ENCODE measurements at regions of chr17 and their contacts with region 1.

Region 1: GRCh38 chr17:59688008-59688407 is 19.2 kb downstream of the PTRH2 start:
- DNase-seq: no peak
- ATAC-seq: no peak
- H3K4me3 ChIP-seq: no peak overlapping the region
- H3K4me3 Mint-ChIP-seq: no peak overlapping the region
- H3K27ac ChIP-seq: no peak overlapping the region
- H3K27ac Mint-ChIP-seq: peak overlapping the region; percentile 60 to 66
- H3K4me1 ChIP-seq: no peaks in the 10 kb centered on the region
- H3K4me1 Mint-ChIP-seq: peaks cover 5 to 17% (median 10%) of the 10 kb centered on the region in 3 donors
- H3K27me3 ChIP-seq: no peaks in the 10 kb centered on the region
- H3K27me3 Mint-ChIP-seq: no peaks in the 10 kb centered on the region

Region 2: GRCh38 chr17:59676716-59677115 is 11.3 kb before region 1 on chr17:
- CTCF ChIA-PET with region 1: interaction called, 3 to 6 read pairs
- POLR2A ChIA-PET with region 1: interaction called in 1 of 2 experiments, 11 read pairs
- DNase-seq: no peak
- ATAC-seq: no peak
- H3K4me3 ChIP-seq: no peak overlapping the region
- H3K4me3 Mint-ChIP-seq: no peak overlapping the region
- H3K27ac ChIP-seq: no peak overlapping the region
- H3K27ac Mint-ChIP-seq: no peak overlapping the region
- H3K4me1 ChIP-seq: no peaks in the 10 kb centered on the region
- H3K4me1 Mint-ChIP-seq: peaks cover 0 to 2% (median 1%) of the 10 kb centered on the region in 3 donors
- H3K27me3 ChIP-seq: no peaks in the 10 kb centered on the region
- H3K27me3 Mint-ChIP-seq: no peaks in the 10 kb centered on the region

Region 3: DNA sequence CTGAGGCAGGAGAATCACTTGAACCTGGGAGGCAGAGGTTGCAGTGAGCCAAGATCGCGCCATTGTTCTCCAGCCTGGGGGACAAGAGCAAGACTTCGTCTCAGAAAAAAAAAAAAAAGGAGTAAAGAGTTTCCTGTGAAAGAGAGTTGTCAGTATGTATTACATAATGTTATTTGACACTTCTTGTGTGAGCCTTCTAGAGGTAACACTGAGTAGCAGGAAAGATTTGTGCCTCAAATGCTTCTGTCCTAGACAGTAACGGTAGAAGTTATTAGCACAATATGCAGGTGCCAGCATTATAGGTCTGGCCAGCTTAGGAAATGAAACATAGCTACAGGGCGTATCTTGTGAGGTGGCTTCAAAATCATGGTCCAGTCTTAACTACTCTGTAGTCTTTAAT is 211.1 kb after region 1 on chr17:
- CTCF ChIA-PET with region 1: interaction called in 1 of 2 experiments, 10 read pairs
- POLR2A ChIA-PET with region 1: no interaction called
- DNase-seq: peak in 1 of 35 experiments; percentile 6
- ATAC-seq: peak in 2 of 4 experiments; percentile 81 to 82
- H3K4me3 ChIP-seq: no peak overlapping the region
- H3K4me3 Mint-ChIP-seq: no peak overlapping the region
- H3K27ac ChIP-seq: no peak overlapping the region
- H3K27ac Mint-ChIP-seq: no peak overlapping the region
- H3K4me1 ChIP-seq: peaks cover 6 to 17% of the 10 kb centered on the region in 2 experiments
- H3K4me1 Mint-ChIP-seq: peaks cover 43 to 50% (median 45%) of the 10 kb centered on the region in 3 donors
- H3K27me3 ChIP-seq: no peaks in the 10 kb centered on the region
- H3K27me3 Mint-ChIP-seq: no peaks in the 10 kb centered on the region